ENCODE measurements at regions of chrX and their contacts with region 1.

Region 1: DNA sequence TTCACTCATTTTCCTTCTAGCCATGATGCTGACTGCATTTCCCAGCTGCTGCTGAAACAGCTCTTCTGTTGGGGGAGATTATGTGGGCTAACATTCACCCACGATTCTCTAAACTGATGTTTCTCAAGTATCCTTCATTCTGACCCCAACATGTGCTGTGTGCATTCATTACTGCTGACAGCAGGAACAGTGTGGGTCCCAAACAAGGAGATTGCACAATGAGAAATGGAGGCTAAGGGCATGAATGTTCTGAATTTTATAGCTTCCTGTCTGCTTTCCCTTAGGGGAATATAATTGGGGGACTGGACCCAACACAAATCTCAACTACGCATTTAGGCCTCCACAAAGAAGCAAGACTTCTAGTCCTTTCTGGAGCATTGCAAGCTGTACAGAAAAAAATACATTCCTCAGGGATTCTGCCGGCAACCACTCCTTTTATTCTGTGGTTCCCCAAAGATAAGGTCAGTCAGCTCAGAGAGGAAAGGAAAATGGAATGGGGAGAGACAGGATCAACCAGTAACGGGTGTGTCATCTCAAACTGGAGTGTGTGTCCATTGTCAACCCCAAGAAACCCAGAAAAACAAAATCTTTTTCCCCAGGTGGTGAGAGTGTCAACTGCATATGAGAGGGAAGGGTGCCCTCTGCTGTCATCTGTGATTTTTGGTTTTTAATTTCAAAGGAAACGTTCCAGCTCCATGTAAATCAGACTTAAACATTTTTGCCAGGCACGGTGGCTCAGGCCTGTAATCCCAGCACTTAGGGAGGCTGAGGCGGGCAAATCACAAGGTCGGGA is 81.5 kb upstream of the EGFL6 start:
- DNase-seq: no peak
- ATAC-seq: peak; percentile 77 to 88

Region 2: GRCh38 chrX:12814420-12814819 is 673.5 kb before region 1 on chrX:
- intact Hi-C with region 1: loop called in 1 of 2 experiments (anchors 10 kb)
- DNase-seq: no peak
- ATAC-seq: no peak

Region 3: DNA sequence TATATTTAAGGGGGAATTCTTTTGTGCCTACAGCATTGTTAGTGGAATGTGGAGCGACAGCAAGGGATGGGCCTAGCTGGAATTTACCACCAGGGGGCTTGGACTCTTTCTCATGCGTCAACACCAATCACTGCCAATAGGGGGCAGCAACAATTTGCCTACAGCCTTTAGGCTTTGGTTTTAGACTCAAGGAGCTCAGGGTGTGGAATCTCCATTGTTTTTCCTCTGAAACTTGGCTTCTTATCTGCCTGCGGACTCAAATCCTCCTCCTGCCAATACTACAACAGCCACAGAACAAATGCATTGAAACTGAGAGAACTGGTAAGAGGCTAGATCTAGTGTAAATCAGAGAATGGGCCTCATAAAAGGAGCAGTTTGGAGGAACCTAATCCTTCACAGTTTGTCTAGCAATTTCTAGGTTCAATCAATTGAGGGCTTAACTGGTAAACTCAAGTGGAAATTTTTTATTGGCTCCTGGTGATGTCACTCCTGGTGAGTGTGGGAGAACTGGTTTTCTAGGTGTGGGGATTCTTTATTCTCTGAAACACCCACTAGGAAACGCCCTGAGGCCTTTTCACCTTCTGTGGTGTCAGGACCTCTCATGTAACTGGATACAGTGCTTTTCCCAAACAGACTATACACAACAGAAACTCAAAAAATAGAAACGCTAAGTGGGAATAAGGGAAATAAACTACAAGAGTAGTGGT is 540.9 kb before region 1 on chrX:
- intact Hi-C with region 1: loop called in 1 of 2 experiments (anchors 2 kb)
- DNase-seq: peak; percentile 69
- ATAC-seq: peak; percentile 49 to 73

Region 4: GRCh38 chrX:12974796-12975669 is 512.9 kb before region 1 on chrX and contains the start of gene TMSB4X:
- intact Hi-C with region 1: loop called (anchors 2 to 10 kb)
- DNase-seq: peak; percentile 88
- ATAC-seq: peak; percentile 84 to 85
- total RNA-seq, gene TMSB4X: 1,546 to 1,715 TPM

Region 5: DNA sequence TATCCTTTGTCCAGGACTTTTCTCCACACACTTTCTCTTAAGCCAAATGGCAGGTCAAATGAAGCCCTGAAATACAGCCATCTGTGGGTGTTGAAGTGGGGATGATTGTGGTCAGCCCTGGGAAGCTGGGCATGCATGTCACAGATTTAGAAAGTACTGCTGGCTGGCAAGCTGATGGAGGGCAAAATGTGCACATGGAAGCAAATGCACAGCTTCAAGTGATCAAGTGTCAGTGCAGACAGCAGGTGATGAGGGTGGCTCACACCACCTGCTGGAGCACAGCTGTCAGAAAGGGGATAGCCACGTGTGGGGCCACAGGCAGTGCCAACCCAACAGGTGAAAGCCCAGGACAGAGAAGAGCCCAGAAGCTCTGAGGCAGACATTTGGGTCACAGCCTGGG is 127.8 kb before region 1 on chrX:
- intact Hi-C with region 1: loop called in 1 of 2 experiments (anchors 10 kb)
- DNase-seq: no peak
- ATAC-seq: peak; percentile 87 to 88

Region 6: DNA sequence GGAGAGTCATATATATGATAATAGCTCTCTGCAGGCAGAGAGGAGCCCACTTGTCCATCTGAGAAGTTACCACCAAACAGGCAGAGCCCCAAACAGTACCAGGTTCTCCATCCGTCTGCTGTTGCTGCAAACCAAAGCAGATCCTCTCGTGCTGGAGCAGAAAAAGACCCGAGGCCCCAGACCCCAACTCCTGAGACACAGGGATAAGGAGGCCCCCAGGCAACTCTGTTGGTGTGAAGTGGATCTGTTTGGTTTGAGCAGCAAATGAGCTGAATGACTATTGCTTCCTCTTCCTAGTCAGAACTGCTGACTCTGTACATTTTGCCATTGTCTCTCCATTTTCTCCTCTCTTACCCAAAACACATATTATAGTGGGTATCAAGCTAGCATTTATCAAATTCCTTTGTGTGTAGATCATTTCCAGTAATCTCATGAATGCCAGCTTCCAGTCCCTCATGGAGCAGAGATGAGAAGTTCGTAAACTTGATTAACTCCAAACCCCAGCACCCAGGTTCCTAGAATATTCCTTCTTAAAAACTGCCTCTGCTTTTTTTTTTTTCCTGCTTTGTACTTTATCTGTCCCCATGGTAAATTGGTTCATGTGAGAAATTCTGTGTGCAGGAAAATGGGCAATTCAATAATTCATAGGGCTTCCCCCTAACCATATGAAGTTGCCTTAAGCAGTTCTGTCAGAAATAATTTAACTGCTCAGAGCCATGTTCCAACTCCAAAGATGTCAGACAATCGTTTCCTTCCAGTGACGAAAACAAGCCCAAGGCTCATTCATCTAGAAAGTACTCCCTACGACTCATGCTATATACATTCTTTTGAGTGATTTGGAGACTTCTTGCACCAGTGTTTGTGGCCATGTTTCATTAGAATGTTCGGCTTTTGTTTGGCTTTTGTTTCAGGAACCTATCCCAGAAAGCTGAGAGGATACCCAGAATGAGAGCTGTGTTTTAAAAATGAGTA is 69.5 kb before region 1 on chrX:
- intact Hi-C with region 1: no loop called
- DNase-seq: no peak
- ATAC-seq: no peak

Region 7: GRCh38 chrX:14356401-14356800 is 868.5 kb after region 1 on chrX:
- intact Hi-C with region 1: no loop called
- DNase-seq: no peak
- ATAC-seq: no peak

Measured in left cardiac atrium (tissue), 4 donors.